ENCODE measurements at regions of chr20 and their contacts with region 1.

Region 1: DNA sequence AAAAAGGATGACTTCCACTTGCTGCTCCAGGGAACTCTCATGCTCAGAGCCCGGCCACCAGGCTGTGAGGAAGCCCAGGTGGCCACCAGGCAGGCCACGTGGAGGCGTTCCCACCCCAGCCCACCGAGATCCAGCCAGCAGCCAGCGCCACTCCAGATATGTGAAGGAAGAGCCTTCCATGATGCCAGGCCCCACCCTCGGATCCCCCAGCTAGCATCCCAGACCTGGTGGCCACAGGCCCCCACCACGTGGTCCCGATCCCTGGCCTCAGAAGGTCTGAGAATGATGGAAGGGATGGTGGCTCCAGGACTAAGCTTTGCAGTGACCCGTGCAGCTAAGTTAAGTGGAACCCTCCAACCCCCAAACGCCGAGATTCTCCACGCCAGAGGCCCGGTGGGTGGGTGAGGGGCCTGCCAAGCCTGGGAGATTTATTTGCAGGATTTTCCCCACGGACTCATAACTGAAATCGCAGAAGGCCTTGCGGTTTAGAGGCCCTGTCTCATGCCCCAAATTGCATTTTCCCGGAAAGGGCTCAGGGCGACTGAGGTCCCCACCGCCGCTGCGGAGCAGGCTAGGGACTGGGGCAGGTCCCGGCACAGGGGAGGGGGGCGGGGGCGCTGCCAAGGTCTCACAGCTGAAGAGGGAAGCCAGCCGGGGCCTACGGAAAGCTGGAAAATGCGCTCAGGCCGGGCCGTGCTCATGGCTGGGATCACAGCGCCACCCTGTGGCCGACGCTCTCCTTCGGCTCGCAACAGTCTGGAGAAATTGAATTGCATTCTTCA is 31.1 kb upstream of the CST7 start:
- DNase-seq: peak; percentile 21 to 54 (median 27)
- H3K4me3 ChIP-seq: no peak overlapping the region
- H3K4me3 Mint-ChIP-seq: peak overlapping the region; percentile 21 to 28
- H3K27ac ChIP-seq: no peak overlapping the region
- H3K27ac Mint-ChIP-seq: no peak overlapping the region
- H3K4me1 ChIP-seq: peaks cover 0 to 5% of the 10 kb centered on the region in 2 donors
- H3K4me1 Mint-ChIP-seq: peaks cover 8% of the 10 kb centered on the region
- H3K27me3 ChIP-seq: no peaks in the 10 kb centered on the region
- H3K27me3 Mint-ChIP-seq: peaks cover 6 to 12% (median 6%) of the 10 kb centered on the region in 3 donors
- CTCF ChIP-seq: peak; percentile 89

Region 2: DNA sequence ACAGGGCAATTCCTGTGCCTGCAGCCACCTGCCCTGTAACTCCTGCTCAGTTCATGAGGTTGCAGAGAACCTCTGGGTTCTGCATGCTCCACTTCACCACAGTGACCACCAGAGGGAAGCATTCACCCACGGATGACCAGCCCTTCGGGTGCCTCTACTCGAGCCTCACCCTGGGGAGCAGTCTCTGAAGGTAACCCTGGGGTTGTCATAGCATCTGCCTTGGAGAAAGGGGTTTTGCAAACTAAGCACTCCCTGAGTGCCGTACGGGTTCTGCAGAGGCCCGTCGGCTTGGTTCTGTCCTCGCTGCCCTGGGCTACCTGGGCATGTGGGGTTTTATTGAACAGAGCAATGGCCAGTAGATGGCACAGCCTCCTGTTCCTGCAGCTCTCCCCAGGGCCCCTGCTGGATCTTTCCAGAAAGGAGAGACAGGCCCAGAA is 1028.2 kb before region 1 on chr20:
- intact Hi-C with region 1: loop called in 1 of 2 experiments (anchors 10 kb)
- DNase-seq: peak in 1 of 3 donors; percentile 23
- H3K4me3 ChIP-seq: no peak overlapping the region
- H3K4me3 Mint-ChIP-seq: no peak overlapping the region
- H3K27ac ChIP-seq: no peak overlapping the region
- H3K27ac Mint-ChIP-seq: no peak overlapping the region
- H3K4me1 ChIP-seq: no peaks in the 10 kb centered on the region
- H3K4me1 Mint-ChIP-seq: no peaks in the 10 kb centered on the region
- H3K27me3 ChIP-seq: peaks cover 0 to 2% of the 10 kb centered on the region in 2 donors
- H3K27me3 Mint-ChIP-seq: peaks cover 2 to 3% (median 2%) of the 10 kb centered on the region in 3 donors
- CTCF ChIP-seq: peak; percentile 72

Region 3: DNA sequence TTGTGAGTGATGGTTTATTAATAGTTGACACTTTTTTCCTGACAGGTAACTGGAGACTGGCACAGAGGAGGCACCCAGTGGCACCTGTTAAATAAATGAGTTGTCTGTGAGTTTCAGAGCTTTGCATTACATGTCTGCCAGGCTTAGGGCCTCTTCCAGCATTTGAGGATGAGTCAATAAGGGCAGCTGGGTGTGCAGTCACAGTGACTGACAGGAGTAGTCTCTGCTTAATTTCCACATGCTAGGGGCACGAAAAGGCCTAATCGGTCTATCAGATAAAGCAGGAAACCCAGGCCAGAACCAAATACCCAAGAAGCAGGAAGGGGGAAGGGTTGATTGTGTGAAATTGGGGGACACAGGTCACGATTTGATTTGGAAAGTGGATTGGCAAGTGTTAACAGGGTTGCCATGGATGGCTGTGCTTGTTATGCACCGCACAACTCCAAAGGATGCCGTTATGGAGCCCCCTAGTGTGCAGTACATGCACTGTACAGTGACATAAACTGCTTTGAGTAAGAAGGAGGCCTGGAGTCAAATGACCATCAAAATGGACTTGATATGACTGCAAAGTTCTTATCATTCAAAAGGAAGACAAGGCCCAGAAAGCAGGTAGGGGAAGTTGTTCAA is 817.5 kb before region 1 on chr20:
- intact Hi-C with region 1: loop called in 1 of 2 experiments (anchors 5 kb)
- DNase-seq: peak in 2 of 3 donors; percentile 22 to 25
- H3K4me3 ChIP-seq: no peak overlapping the region
- H3K4me3 Mint-ChIP-seq: no peak overlapping the region
- H3K27ac ChIP-seq: no peak overlapping the region
- H3K27ac Mint-ChIP-seq: peak overlapping the region in 1 of 7 donors; percentile 58
- H3K4me1 ChIP-seq: no peaks in the 10 kb centered on the region
- H3K4me1 Mint-ChIP-seq: no peaks in the 10 kb centered on the region
- H3K27me3 ChIP-seq: no peaks in the 10 kb centered on the region
- H3K27me3 Mint-ChIP-seq: peaks cover 1 to 5% (median 1%) of the 10 kb centered on the region in 3 donors
- CTCF ChIP-seq: peak; percentile 78